ENCODE measurements at regions of chr11 and their contacts with region 1.

Region 1: DNA sequence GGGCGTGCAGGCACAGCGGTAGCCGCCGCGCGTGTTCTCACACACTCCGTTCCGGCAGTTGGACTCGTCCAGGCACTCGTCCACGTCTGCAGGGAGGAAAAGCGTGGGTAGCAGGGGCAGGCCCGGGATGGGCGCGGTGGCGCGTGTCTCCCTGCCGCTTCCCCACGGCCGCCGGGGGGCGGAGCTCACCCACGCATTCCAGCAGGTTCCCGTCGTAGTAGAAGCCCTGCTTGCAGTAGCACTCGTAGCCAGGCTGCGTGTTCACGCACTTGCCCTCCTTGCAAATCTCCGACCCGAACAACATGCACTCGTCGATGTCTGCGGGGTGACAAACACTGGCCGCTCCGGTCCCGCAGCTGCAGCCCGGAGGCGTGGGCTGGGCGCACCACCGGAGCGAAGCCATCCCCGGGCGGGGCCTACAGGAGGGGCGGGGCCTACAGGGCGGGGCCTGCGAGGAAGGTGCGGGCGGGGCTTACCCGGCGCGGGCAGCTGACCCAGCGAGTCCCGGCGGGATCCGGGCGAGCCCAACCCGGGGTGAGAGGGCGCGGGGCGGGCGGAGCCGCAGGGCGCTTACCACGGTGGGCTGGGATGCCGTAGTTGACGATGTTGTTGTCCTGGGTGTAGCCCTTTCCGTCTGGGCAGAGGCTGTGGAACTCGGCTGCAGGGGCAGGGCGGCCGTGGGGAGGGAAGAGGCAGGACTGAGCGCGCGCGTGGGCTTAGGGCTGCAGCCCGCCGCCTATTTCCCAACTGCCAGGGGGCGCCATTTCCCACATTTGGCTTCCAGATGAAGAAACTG is 15.6 kb downstream of the SCYL1 start:
- DNase-seq: peak; percentile 90 to 95 (median 93)
- ATAC-seq: peak; percentile 84 to 93 (median 91)
- H3K4me3 ChIP-seq: peak overlapping the region; percentile 11 to 66 (median 52)
- H3K27ac ChIP-seq: peak overlapping the region; percentile 66 to 95 (median 88)
- H3K4me1 ChIP-seq: peaks cover 0 to 28% (median 20%) of the 10 kb centered on the region in 12 donors
- H3K27me3 ChIP-seq: no peaks in the 10 kb centered on the region
- CTCF ChIP-seq: peak; percentile 79 to 95 (median 88)
- POLR2A ChIP-seq: peak in 1 of 2 donors; percentile 49

Region 2: GRCh38 chr11:65569973-65570918 is 29.8 kb after region 1 on chr11 and contains the start of gene ZNRD2:
- intact Hi-C with region 1: loop called in 6 of 10 experiments (anchors 1 to 5 kb)
- DNase-seq: peak; percentile 98 to 99 (median 99)
- ATAC-seq: peak; percentile 85 to 92 (median 90)
- H3K4me3 ChIP-seq: peak within 1 kb of the TSS; percentile 56 to 96 (median 82)
- H3K27ac ChIP-seq: peak within 1 kb of the TSS; percentile 64 to 99 (median 95)
- H3K4me1 ChIP-seq: peaks cover 17 to 77% (median 55%) of the 10 kb centered on the region in 12 donors
- H3K27me3 ChIP-seq: peaks cover 0 to 6% (median 0%) of the 10 kb centered on the region in 9 donors
- CTCF ChIP-seq: peak in 11 of 12 donors; percentile 33 to 71 (median 55)
- POLR2A ChIP-seq: peak in 1 of 2 donors; percentile 72
- total RNA-seq, gene ZNRD2: 23.2 to 63.6 (median 33.9) TPM

Region 3: DNA sequence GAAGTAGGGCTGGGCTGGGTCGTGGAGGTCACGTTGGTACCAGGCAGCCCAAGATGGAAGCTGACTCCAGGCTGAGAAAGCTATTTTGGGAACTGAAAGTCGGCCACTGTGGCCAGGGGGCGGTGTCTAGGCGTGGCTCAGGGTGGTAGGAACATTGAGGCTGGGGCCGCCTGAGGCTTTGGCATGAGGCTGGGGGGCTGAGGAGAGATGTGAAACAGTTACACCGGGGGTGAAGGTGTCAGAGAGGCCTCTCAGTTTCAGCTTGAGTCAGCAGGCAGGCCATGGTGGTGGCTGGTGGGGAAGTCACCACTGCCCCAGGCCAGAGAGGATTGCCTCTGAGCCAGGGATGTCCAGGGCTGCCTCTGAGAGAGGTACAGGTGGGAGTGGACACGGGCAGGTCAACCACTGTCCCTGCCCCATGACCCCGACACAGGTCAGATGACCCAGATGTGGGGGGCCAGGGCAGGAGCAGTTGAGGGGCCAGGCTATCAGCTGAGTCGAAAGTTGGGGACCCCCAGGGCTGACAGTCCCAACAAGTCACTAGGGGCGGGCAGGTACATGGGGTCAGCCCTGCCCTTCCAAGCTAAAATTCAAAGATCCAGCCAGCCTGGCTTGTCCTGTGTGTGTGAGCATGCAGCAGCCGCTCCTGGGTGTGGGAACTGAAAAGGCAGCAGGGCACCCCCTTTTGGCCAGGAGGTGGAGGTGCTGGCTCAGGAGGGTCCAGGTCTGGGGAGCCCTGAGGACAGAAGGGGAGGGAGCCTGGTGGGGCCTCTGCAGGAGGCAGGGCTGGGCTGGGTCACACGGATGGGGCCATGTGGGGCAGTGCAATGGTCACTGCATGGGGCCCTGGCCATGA is 47.9 kb after region 1 on chr11:
- intact Hi-C with region 1: loop called in 7 of 10 experiments (anchors 2 to 10 kb)
- DNase-seq: peak in 4 of 5 donors; percentile 70 to 79 (median 76)
- ATAC-seq: peak; percentile 57 to 77 (median 71)
- H3K4me3 ChIP-seq: peak overlapping the region in 1 of 12 donors; percentile 26
- H3K27ac ChIP-seq: peak overlapping the region; percentile 21 to 90 (median 83)
- H3K4me1 ChIP-seq: peaks cover 6 to 75% (median 54%) of the 10 kb centered on the region in 12 donors
- H3K27me3 ChIP-seq: no peaks in the 10 kb centered on the region
- CTCF ChIP-seq: peak; percentile 36 to 66 (median 54)
- POLR2A ChIP-seq: no peak

Region 4: GRCh38 chr11:65615229-65615941 is 74.9 kb after region 1 on chr11 and contains the start of gene PCNX3:
- intact Hi-C with region 1: loop called in 1 of 10 experiments (anchors 2 kb)
- DNase-seq: peak; percentile 100
- ATAC-seq: peak; percentile 86 to 90 (median 88)
- H3K4me3 ChIP-seq: peak within 1 kb of the TSS; percentile 89 to 100 (median 96)
- H3K27ac ChIP-seq: peak within 1 kb of the TSS; percentile 95 to 99 (median 97)
- H3K4me1 ChIP-seq: peaks cover 5 to 57% (median 34%) of the 10 kb centered on the region in 12 donors
- H3K27me3 ChIP-seq: no peaks in the 10 kb centered on the region
- CTCF ChIP-seq: no peak
- POLR2A ChIP-seq: peak in 1 of 2 donors; percentile 68
- total RNA-seq, gene PCNX3: 9.5 to 23.4 (median 15.4) TPM

Region 5: GRCh38 chr11:66001942-66002647 is 461.6 kb after region 1 on chr11 and contains the starts of genes BANF1 and EIF1AD:
- intact Hi-C with region 1: loop called in 1 of 10 experiments (anchors 10 kb)
- DNase-seq: peak; percentile 93
- ATAC-seq: peak; percentile 87 to 95 (median 90)
- H3K4me3 ChIP-seq: peak within 1 kb of the TSS; percentile 68 to 98 (median 82)
- H3K27ac ChIP-seq: peak within 1 kb of the TSS; percentile 73 to 99 (median 94)
- H3K4me1 ChIP-seq: peaks cover 3 to 28% (median 24%) of the 10 kb centered on the region in 12 donors
- H3K27me3 ChIP-seq: no peaks in the 10 kb centered on the region
- CTCF ChIP-seq: peak in 1 of 12 donors; percentile 13
- POLR2A ChIP-seq: peak in 1 of 2 donors; percentile 50
- total RNA-seq, gene BANF1: 68.7 to 227 (median 187) TPM
- total RNA-seq, gene EIF1AD: 13.0 to 25.2 (median 20.7) TPM